Right lobe of liver (tissue), 6 donors: ENCODE measurements at regions of chr7 and their contacts with region 1.

Region 1: GRCh38 chr7:128135515-128136214 is 104.4 kb upstream of the LRRC4 start:
- DNase-seq: peak in 1 of 3 donors; percentile 46
- ATAC-seq: peak; percentile 96 to 99 (median 96)
- H3K4me3 ChIP-seq: peak overlapping the region; percentile 44 to 61 (median 54)
- H3K27ac ChIP-seq: no peak overlapping the region
- H3K4me1 ChIP-seq: peaks cover 0 to 10% (median 2%) of the 10 kb centered on the region in 4 donors
- H3K27me3 ChIP-seq: peaks cover 0 to 4% of the 10 kb centered on the region in 2 donors
- CTCF ChIP-seq: peak; percentile 84 to 100 (median 91)
- POLR2A ChIP-seq: no peak

Region 2: DNA sequence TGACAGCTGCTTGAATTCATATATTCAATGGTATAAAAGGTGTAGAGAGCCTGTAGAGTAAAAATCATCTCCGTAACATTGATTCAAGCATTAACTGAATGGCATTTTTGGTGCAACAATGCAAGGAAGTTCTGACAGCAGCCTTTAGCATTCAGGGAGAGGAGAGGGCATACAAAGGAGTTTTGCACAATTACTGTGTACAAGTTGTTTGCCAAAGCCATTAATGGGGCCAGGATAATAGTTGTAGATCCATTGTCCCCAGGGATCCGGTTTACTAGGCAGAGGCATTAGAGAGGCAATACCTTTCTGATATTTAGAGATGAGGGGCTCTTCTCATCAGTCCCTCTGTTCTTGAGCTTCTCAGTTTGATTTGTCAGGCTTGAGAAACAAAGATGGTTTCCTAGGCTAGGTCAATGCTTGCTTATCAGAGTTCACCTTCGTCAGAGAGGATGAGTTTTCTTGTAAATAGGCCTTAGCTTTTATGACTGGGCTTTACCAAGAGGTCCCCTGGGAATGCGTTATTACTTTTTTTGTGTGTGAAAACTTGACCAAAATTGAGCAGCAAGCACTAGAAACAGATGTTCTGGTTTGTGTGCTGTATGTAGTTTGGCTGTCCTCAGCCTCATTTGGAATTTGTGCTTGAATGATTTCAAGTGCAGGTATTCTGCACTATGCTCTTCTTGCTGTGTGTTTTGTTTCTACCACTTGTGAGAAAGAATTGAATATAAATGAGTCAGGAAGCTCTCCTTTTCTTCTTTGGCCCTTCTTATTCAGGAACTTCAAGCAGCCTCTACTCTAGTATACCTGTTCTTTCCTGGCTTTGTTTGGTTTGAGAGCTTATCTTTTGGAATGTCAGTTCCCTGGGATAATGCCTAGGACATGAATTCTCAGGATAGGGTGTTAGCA is 451.6 kb before region 1 on chr7:
- intact Hi-C with region 1: no loop called
- DNase-seq: no peak
- ATAC-seq: no peak
- H3K4me3 ChIP-seq: no peak overlapping the region
- H3K27ac ChIP-seq: no peak overlapping the region
- H3K4me1 ChIP-seq: peaks cover 0 to 23% (median 6%) of the 10 kb centered on the region in 4 donors
- H3K27me3 ChIP-seq: no peaks in the 10 kb centered on the region
- CTCF ChIP-seq: no peak
- POLR2A ChIP-seq: no peak

Region 3: GRCh38 chr7:128209229-128210035 is 73.8 kb after region 1 on chr7:
- intact Hi-C with region 1: loop called in 1 of 2 experiments (anchors 5 kb)
- DNase-seq: peak; percentile 58 to 78 (median 72)
- ATAC-seq: peak; percentile 93 to 98 (median 96)
- H3K4me3 ChIP-seq: no peak overlapping the region
- H3K27ac ChIP-seq: no peak overlapping the region
- H3K4me1 ChIP-seq: no peaks in the 10 kb centered on the region
- H3K27me3 ChIP-seq: no peaks in the 10 kb centered on the region
- CTCF ChIP-seq: peak; percentile 94 to 97 (median 96)
- POLR2A ChIP-seq: no peak